ENCODE measurements at regions of chr12 and their contacts with region 1.

Region 1: GRCh38 chr12:24133384-24133783 is 183.9 kb upstream of the SOX5 start:
- DNase-seq: peak; percentile 90 to 96
- H3K4me3 ChIP-seq: no peak overlapping the region
- H3K4me3 Mint-ChIP-seq: peak overlapping the region; percentile 34
- H3K27ac Mint-ChIP-seq: peak overlapping the region; percentile 62
- H3K4me1 ChIP-seq: peaks cover 62% of the 10 kb centered on the region
- H3K4me1 Mint-ChIP-seq: peaks cover 51% of the 10 kb centered on the region
- H3K27me3 ChIP-seq: no peaks in the 10 kb centered on the region
- H3K27me3 Mint-ChIP-seq: no peaks in the 10 kb centered on the region
- CTCF ChIP-seq: no peak

Region 2: GRCh38 chr12:23949348-23950209 is 183.8 kb before region 1 on chr12 and contains the start of gene SOX5:
- CTCF ChIA-PET with region 1: no interaction called
- POLR2A ChIA-PET with region 1: no interaction called
- intact Hi-C with region 1: no loop called
- DNase-seq: peak; percentile 60 to 61
- H3K4me3 ChIP-seq: peak within 1 kb of the TSS; percentile 48
- H3K4me3 Mint-ChIP-seq: no peak within 1 kb of the TSS
- H3K27ac Mint-ChIP-seq: no peak within 1 kb of the TSS
- H3K4me1 ChIP-seq: no peaks in the 10 kb centered on the region
- H3K4me1 Mint-ChIP-seq: no peaks in the 10 kb centered on the region
- H3K27me3 ChIP-seq: no peaks in the 10 kb centered on the region
- H3K27me3 Mint-ChIP-seq: no peaks in the 10 kb centered on the region
- CTCF ChIP-seq: no peak
- total RNA-seq, gene SOX5: 15.4 and 16.8 TPM in 2 replicates

Region 3: GRCh38 chr12:24036438-24037216 is 96.8 kb before region 1 on chr12:
- CTCF ChIA-PET with region 1: no interaction called
- POLR2A ChIA-PET with region 1: no interaction called
- intact Hi-C with region 1: loop called (anchors 2 kb)
- DNase-seq: peak in 1 of 2 experiments; percentile 36
- H3K4me3 ChIP-seq: no peak overlapping the region
- H3K4me3 Mint-ChIP-seq: no peak overlapping the region
- H3K27ac Mint-ChIP-seq: no peak overlapping the region
- H3K4me1 ChIP-seq: peaks cover 38% of the 10 kb centered on the region
- H3K4me1 Mint-ChIP-seq: peaks cover 28% of the 10 kb centered on the region
- H3K27me3 ChIP-seq: no peaks in the 10 kb centered on the region
- H3K27me3 Mint-ChIP-seq: no peaks in the 10 kb centered on the region
- CTCF ChIP-seq: no peak

Region 4: DNA sequence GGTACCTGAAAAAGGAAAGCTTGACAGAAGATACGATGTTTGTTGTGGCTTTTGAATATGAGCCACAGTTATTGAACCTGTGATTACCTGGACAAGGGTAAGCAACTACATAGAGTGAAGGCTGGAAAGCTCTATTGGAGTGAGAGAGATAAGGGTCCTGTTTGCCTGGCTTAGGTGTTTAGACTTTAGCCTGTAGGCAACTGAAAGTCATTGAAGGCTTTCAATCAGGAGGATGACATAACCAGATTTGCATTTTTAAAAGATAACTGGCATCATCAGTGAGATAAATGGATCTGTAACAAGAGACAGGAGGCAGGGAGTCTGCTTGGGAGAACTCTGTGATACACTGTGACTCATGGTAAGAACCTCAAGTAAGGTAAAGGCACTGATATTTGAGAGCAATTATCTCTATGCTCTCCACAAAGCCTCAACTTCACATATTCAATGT is 55.0 kb before region 1 on chr12:
- CTCF ChIA-PET with region 1: no interaction called
- POLR2A ChIA-PET with region 1: no interaction called
- intact Hi-C with region 1: loop called (anchors 1 kb)
- DNase-seq: peak; percentile 86 to 88
- H3K4me3 ChIP-seq: no peak overlapping the region
- H3K4me3 Mint-ChIP-seq: peak overlapping the region; percentile 53
- H3K27ac Mint-ChIP-seq: peak overlapping the region; percentile 18
- H3K4me1 ChIP-seq: peaks cover 55% of the 10 kb centered on the region
- H3K4me1 Mint-ChIP-seq: peaks cover 50% of the 10 kb centered on the region
- H3K27me3 ChIP-seq: no peaks in the 10 kb centered on the region
- H3K27me3 Mint-ChIP-seq: no peaks in the 10 kb centered on the region
- CTCF ChIP-seq: no peak

Region 5: DNA sequence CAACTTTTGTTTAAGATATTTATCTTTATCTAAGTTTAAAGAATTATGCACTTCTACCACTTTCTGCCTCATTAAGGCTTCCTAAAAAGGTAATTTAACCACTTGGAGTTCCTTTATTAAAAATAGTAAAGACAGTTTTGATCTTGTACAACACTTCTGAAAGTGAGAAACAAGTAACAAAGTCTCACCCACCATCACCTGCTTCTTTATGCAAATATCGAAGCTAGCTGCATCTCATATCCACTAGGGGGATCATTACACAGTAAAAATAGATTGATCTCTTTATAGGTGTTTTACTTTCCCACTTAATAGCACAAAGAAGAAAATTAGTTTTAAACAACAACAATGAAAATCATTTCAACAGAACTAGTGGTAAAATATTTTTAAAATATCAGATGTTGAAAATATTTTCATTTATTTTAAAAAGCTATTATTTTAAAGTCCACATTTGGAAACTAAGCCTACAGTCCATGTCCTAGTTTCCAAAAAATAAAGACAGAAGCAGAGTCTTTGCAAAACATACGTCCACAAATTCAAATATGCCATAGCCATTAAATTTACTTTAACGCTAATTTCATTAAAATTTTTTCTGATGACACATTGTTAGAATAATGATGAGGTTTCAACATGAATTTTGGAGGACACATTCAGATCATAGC is 23.9 kb before region 1 on chr12:
- CTCF ChIA-PET with region 1: no interaction called
- POLR2A ChIA-PET with region 1: no interaction called
- intact Hi-C with region 1: loop called (anchors 1 kb)
- DNase-seq: peak in 1 of 2 experiments; percentile 36
- H3K4me3 ChIP-seq: no peak overlapping the region
- H3K4me3 Mint-ChIP-seq: no peak overlapping the region
- H3K27ac Mint-ChIP-seq: no peak overlapping the region
- H3K4me1 ChIP-seq: no peaks in the 10 kb centered on the region
- H3K4me1 Mint-ChIP-seq: no peaks in the 10 kb centered on the region
- H3K27me3 ChIP-seq: no peaks in the 10 kb centered on the region
- H3K27me3 Mint-ChIP-seq: no peaks in the 10 kb centered on the region
- CTCF ChIP-seq: peak; percentile 73 to 76

Region 6: GRCh38 chr12:24121911-24122310 is 11.5 kb before region 1 on chr12:
- CTCF ChIA-PET with region 1: no interaction called
- POLR2A ChIA-PET with region 1: no interaction called
- intact Hi-C with region 1: loop called (anchors 1 kb)
- DNase-seq: no peak
- H3K4me3 ChIP-seq: no peak overlapping the region
- H3K4me3 Mint-ChIP-seq: no peak overlapping the region
- H3K27ac Mint-ChIP-seq: peak overlapping the region; percentile 5
- H3K4me1 ChIP-seq: peaks cover 13% of the 10 kb centered on the region; the same call in 1 of the 2 replicates
- H3K4me1 Mint-ChIP-seq: peaks cover 7% of the 10 kb centered on the region
- H3K27me3 ChIP-seq: no peaks in the 10 kb centered on the region
- H3K27me3 Mint-ChIP-seq: no peaks in the 10 kb centered on the region
- CTCF ChIP-seq: no peak

Region 7: GRCh38 chr12:24153079-24153478 is 19.7 kb after region 1 on chr12:
- CTCF ChIA-PET with region 1: no interaction called
- POLR2A ChIA-PET with region 1: no interaction called
- intact Hi-C with region 1: no loop called
- DNase-seq: no peak
- H3K4me3 ChIP-seq: no peak overlapping the region
- H3K4me3 Mint-ChIP-seq: no peak overlapping the region
- H3K27ac Mint-ChIP-seq: no peak overlapping the region
- H3K4me1 ChIP-seq: peaks cover 18% of the 10 kb centered on the region
- H3K4me1 Mint-ChIP-seq: peaks cover 21% of the 10 kb centered on the region
- H3K27me3 ChIP-seq: no peaks in the 10 kb centered on the region
- H3K27me3 Mint-ChIP-seq: no peaks in the 10 kb centered on the region
- CTCF ChIP-seq: no peak

Region 8: DNA sequence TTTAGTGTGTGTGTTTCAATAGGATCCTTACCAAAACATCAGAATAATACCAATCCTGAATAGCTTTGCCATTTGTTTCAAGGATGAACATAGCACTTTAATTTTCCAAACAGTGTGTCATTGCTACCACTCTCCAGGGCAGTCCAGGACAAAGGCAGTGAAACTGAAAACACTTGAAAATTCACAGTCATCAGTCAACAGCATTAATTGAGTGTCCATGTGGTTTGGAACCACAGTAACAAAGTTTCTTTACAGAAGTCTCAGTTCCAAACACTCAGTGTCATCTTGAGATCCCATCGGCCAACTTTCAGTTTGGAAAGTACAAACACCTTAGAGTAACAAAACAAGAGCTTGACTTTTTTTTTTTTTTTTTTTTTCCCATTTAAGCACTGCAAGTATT is 44.5 kb after region 1 on chr12:
- CTCF ChIA-PET with region 1: no interaction called
- POLR2A ChIA-PET with region 1: no interaction called
- intact Hi-C with region 1: no loop called
- DNase-seq: no peak
- H3K4me3 ChIP-seq: no peak overlapping the region
- H3K4me3 Mint-ChIP-seq: no peak overlapping the region
- H3K27ac Mint-ChIP-seq: no peak overlapping the region
- H3K4me1 ChIP-seq: 0 out of 2 replicates have a peak, but pooled peaks cover 5% of the 10 kb centered on the region
- H3K4me1 Mint-ChIP-seq: peaks cover 6% of the 10 kb centered on the region
- H3K27me3 ChIP-seq: no peaks in the 10 kb centered on the region
- H3K27me3 Mint-ChIP-seq: no peaks in the 10 kb centered on the region
- CTCF ChIP-seq: no peak

Region 9: GRCh38 chr12:24255920-24256665 is 122.7 kb after region 1 on chr12:
- CTCF ChIA-PET with region 1: no interaction called
- POLR2A ChIA-PET with region 1: no interaction called
- intact Hi-C with region 1: loop called (anchors 1 kb)
- DNase-seq: peak; percentile 47 to 61
- H3K4me3 ChIP-seq: 0 out of 2 replicates have a peak overlapping the region, but pooled peaks have one; percentile 3
- H3K4me3 Mint-ChIP-seq: peak overlapping the region; percentile 17
- H3K27ac Mint-ChIP-seq: peak overlapping the region; percentile 54
- H3K4me1 ChIP-seq: peaks cover 22% of the 10 kb centered on the region
- H3K4me1 Mint-ChIP-seq: peaks cover 21% of the 10 kb centered on the region
- H3K27me3 ChIP-seq: no peaks in the 10 kb centered on the region
- H3K27me3 Mint-ChIP-seq: no peaks in the 10 kb centered on the region
- CTCF ChIP-seq: no peak

Measured in Caco-2 (cell line).